ENCODE measurements at regions of chr2 and their contacts with region 1.

Region 1: DNA sequence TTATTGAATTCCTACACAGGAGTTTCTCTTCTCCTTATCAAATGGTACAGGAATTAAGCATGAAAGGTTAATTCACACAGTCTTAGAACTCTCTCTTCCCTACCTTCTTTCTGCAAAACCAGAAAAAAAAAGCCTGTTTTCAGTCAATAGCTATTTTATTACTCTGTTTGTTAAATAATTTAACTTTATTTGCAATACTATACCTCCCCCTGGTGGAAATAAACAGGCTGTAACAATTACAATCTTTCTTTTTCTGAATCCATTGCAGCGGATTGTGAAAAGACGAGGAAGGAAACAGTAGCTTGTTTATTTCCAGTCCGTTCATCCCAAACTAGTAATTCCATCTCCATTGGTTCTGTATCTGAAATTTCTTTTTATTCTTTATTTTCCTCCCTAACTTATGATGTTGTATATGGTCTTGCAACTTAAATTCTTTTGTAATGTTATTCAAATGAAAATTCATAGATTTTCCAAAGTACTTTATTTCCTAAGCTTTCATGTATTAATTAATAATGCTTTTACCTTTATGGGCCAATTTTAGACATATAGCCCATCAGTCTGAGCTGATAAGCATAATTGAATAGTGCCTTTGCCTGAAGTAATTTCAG is 165.2 kb downstream of the SH3BP4 start:
- DNase-seq: peak in 2 of 4 donors; percentile 32 to 50
- ATAC-seq: peak; percentile 65
- H3K4me3 ChIP-seq: no peak overlapping the region
- H3K27ac ChIP-seq: no peak overlapping the region
- H3K4me1 ChIP-seq: no peaks in the 10 kb centered on the region
- H3K27me3 ChIP-seq: peaks cover 0 to 6% of the 10 kb centered on the region in 2 donors
- CTCF ChIP-seq: peak; percentile 54 to 64

Region 2: GRCh38 chr2:234544659-234545611 is 572.1 kb before region 1 on chr2:
- intact Hi-C with region 1: loop called (anchors 5 to 10 kb)
- DNase-seq: peak; percentile 46 to 84 (median 60)
- ATAC-seq: peak; percentile 83
- H3K4me3 ChIP-seq: no peak overlapping the region
- H3K27ac ChIP-seq: no peak overlapping the region
- H3K4me1 ChIP-seq: no peaks in the 10 kb centered on the region
- H3K27me3 ChIP-seq: peaks cover 0 to 17% of the 10 kb centered on the region in 2 donors
- CTCF ChIP-seq: peak; percentile 89 to 93

Region 3: DNA sequence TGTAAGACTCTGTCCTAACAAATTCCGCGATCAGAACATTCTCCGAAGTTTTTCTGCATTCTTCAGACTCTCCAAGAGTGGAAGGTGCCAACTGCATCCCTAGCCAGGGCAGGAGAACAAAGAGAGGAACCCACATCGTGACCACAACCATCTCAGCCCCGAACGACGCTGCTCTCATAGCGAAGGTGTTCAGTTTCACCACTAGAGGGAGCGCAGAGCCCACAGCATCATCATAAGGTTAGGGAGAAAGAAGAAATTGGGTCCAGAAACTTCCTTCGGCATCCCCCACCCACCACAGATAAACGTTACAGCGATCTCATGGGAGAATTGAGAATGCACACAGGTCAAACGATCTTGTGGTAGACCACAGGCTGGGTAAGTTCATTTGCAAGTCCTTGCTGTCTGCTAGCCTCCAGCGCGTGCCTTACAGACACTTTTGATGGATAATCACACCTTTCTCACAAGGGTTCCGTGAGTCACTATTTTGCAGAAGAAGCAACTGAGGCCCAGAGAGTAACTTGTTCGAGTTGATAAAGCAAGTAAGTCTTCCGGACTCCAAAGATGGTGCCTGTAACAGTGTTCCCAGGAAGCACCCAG is 566.4 kb before region 1 on chr2:
- intact Hi-C with region 1: loop called (anchors 5 to 10 kb)
- DNase-seq: peak; percentile 28 to 78 (median 68)
- ATAC-seq: peak; percentile 91
- H3K4me3 ChIP-seq: no peak overlapping the region
- H3K27ac ChIP-seq: no peak overlapping the region
- H3K4me1 ChIP-seq: no peaks in the 10 kb centered on the region
- H3K27me3 ChIP-seq: peaks cover 0 to 15% of the 10 kb centered on the region in 2 donors
- CTCF ChIP-seq: peak; percentile 85 to 86

Measured in left lung (tissue), 14 donors.